GM23248 (cell line): ENCODE measurements at regions of chr9 and their contacts with region 1.

Region 1: DNA sequence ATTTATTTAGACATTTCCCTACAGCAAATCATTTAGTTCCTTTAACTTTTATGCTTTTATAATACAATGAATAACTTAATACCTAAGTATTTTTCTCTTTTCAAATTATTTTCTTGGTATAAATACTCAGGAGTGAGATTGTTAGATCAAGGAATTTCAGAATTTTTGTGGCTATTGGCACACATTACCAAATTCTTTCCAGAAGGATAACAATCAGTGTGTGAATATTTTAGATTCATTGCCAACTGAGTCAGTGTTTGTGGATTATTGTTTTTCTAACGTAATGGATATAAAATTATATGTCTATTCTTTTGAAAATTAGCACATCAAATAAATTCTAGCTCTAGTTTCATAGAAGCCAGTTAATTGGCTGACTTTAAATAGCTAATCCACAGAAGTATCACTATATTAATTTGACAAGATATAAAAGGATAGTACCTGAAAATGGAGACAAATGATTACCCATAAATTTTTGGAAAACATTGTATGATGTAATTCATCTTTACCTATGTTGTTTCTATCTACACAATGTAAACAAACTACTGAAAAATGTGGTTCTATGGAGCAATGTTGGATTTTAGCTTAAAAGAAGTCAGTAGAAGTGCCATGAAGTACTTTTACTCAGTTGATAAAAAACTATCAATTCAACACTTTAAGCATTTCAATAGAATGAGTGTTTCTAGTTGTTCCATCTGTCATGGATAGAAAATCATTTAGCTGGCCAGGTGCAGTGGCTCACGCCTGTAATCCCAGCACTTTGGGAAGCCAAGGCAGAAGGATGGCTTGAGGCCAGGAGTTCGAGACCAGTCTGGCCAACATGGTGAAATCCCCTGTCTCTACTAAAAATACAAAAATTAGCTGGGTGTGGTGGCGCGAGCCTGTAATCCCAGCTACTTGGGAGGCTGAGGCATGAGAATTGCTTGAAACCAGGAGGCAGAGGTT is 185.1 kb downstream of the ADAMTSL1 start:
- DNase-seq: peak; percentile 79
- H3K4me3 ChIP-seq: peak overlapping the region; percentile 10
- H3K27ac ChIP-seq: peak overlapping the region; percentile 52
- H3K4me1 ChIP-seq: peaks cover 26% of the 10 kb centered on the region
- H3K27me3 ChIP-seq: no peaks in the 10 kb centered on the region

Region 2: GRCh38 chr9:18596920-18597319 is 62.1 kb before region 1 on chr9:
- in situ Hi-C with region 1: loop called (anchors 10 kb)
- DNase-seq: peak; percentile 80
- H3K4me3 ChIP-seq: no peak overlapping the region
- H3K27ac ChIP-seq: peak overlapping the region; percentile 45
- H3K4me1 ChIP-seq: peaks cover 24% of the 10 kb centered on the region
- H3K27me3 ChIP-seq: no peaks in the 10 kb centered on the region

Region 3: DNA sequence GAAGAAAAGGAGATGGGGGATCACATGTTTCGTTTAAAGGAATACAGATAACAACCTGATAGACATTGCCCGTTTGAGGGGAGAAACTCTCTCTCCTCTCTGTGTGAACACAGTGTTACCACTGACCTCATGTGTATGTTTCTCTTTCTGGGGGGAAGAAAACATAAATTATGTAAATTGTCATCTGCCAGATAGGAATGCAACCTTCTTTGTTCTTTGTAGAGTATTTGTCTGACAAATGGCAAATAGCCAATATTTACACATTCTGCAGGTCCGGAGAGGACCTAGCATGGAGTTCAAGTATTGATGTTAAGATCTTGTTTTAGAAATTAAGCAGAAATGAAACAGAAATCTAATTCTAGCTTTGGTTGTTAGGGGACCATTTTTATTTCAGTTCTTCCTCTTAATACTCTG is 97.7 kb after region 1 on chr9:
- in situ Hi-C with region 1: no loop called
- DNase-seq: no peak
- H3K4me3 ChIP-seq: no peak overlapping the region
- H3K27ac ChIP-seq: 0 out of 2 replicates have a peak overlapping the region, but pooled peaks have one; percentile 16
- H3K4me1 ChIP-seq: no peaks in the 10 kb centered on the region
- H3K27me3 ChIP-seq: no peaks in the 10 kb centered on the region

Region 4: DNA sequence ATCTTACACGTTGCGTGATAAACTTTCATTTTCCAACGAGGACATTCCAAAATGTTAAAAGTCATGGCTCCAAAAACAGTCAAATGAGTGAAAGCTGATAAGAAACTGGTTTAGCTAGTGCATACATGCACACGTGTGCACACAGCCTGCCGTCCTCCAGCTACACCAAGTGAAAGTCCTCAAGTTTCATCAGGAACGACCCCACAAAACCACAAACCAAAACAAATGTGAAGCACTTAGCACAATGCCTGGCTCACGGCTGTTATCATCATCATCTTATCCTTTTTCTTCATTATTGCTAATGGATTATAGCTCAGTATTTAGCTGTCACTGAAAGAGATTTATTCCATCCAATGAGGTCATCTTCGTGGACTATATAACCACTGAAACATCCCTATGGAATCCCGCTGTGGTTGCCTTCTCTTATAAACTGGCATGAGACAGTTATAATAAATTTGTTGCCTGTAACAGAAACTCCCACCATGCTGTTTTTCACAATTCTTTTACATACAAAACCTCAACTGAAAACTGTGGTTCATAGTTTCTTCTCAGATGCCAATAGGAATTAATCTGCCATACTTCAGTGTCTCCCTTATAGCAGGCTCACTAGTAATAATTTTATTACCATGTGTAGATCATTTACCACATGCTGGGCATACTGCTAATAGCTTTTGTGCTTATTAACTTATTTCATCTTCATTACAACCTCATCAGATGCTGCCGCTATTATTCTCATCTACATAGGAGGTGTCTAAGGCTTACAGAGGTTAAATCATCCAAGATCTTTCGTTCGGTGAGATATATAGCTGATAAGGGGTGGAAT is 317.9 kb after region 1 on chr9:
- in situ Hi-C with region 1: no loop called
- DNase-seq: peak; percentile 85
- H3K4me3 ChIP-seq: peak overlapping the region; percentile 59
- H3K27ac ChIP-seq: peak overlapping the region; percentile 8; the same call in 1 of the 2 replicates
- H3K4me1 ChIP-seq: peaks cover 26% of the 10 kb centered on the region
- H3K27me3 ChIP-seq: peaks cover 30% of the 10 kb centered on the region; the same call in 1 of the 2 replicates